MCF 10A (cell line): ENCODE measurements at regions of chr20 and their contacts with region 1.

Region 1: DNA sequence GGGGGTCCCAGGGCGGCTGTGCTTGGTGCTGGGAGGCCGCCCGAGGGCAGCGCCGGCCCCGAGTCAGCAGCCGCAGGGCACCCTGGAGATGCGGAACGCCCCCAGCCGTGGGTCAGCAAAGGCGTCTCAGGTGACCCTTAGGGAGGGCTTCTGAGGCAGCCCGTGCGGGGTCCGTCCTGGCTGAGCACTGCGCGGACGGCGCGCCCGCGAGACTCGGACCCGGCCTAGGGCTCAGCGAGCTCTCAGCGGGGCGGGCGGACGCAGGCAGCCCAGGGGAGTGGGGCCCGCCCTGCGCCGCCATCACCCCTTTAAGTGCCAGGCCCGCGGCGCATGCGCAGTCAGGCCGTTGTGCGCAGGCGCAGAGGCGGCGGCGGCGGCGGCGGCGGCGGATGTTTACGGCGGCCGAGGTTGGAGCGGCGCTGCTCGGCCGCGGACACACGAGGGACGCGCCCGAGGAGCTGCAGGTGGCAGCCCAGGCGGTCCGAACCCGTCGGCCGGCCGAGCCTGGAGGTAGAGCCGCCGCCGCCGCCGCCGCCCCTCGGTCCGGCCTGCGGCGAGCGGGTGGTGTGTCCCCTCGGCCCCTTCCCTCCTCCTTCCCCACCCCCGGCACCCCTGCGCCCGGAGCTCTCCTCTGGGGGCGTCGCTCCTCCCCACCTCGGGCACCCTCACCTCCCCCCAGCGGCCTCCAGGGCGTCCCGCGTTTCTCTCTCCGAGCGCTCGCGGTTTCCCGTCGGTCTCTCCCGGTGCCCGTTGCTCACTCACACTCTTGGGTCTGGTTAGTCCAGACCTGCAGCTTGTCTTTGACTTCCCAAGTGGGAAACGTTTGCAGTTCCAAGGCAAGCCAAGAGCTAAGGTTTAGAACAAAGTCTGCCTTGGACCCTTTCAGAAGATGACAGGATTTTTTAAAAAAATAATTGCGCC is at the start of gene PCMTD2:
- DNase-seq: peak; percentile 82
- H3K4me3 Mint-ChIP-seq: peak within 1 kb of the TSS; percentile 88
- H3K27ac Mint-ChIP-seq: peak within 1 kb of the TSS; percentile 92
- H3K4me1 Mint-ChIP-seq: peaks cover 24% of the 10 kb centered on the region
- H3K27me3 Mint-ChIP-seq: peaks cover 13% of the 10 kb centered on the region
- CTCF ChIP-seq: no peak
- total RNA-seq, gene PCMTD2: 39.4 and 45.9 TPM in 2 replicates

Region 2: DNA sequence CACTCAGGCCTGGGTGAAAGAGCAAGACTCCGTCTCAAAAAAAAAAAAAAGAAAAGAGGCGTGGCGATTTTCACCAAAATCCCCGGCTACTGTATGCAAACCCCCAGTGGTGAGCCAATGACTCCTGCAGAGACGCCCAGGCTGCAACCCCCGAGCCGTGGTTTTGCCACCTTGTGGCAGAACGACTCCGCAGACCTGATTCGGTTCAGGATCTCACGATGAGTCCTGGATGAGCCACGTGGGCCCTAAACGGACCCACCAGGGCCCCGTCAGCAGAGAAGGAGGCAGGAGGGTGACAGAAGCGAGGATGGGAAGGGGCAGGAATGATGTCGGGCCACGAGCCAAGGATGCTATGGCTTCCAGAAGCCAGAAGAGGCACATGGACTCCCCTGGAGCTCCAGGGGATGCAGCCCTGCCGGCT is 473.6 kb before region 1 on chr20:
- CTCF ChIA-PET with region 1: no interaction called
- POLR2A ChIA-PET with region 1: no interaction called
- intact Hi-C with region 1: no loop called
- DNase-seq: no peak
- H3K4me3 Mint-ChIP-seq: no peak overlapping the region
- H3K27ac Mint-ChIP-seq: no peak overlapping the region
- H3K4me1 Mint-ChIP-seq: peaks cover 9% of the 10 kb centered on the region
- H3K27me3 Mint-ChIP-seq: no peaks in the 10 kb centered on the region
- CTCF ChIP-seq: no peak

Region 3: DNA sequence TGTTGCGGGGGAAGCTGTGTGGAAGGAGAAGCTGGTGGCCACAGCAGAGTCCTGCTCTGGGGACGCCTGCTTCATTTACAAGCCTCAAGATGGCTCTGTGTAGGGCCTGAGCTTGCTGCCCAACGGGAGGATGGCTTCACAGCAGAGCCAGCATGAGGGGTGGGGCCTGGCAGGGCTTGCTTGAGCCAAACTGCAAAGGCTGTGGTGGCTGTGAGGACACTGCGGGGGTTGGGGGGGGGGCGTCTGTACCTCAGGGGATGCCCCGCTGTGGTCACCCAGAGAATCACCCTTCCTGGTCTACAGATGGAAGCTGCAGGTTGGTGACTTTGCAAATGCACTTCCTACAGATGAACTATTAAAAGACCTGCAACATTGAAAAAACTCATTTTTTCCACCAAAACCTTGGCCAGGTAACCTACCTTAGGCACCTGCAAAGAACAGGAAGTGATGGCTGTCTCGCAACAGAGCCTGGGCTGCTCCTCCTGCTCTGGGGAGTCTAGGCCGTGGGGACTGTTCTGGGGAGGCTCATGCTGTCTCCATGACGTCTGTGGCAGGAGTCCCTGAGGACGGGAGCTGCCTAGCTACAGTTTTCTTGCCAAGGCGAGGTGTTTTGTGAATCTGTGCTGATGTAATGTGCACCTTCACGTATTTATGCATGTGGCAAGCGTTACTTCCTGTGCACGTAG is 155.6 kb before region 1 on chr20:
- CTCF ChIA-PET with region 1: no interaction called
- POLR2A ChIA-PET with region 1: no interaction called
- intact Hi-C with region 1: no loop called
- DNase-seq: no peak
- H3K4me3 Mint-ChIP-seq: no peak overlapping the region
- H3K27ac Mint-ChIP-seq: no peak overlapping the region
- H3K4me1 Mint-ChIP-seq: no peaks in the 10 kb centered on the region
- H3K27me3 Mint-ChIP-seq: peaks cover 35% of the 10 kb centered on the region
- CTCF ChIP-seq: no peak

Region 4: GRCh38 chr20:64192406-64192805 is 63.2 kb before region 1 on chr20:
- CTCF ChIA-PET with region 1: no interaction called
- POLR2A ChIA-PET with region 1: interaction called, 11 read pairs
- intact Hi-C with region 1: no loop called
- DNase-seq: no peak
- H3K4me3 Mint-ChIP-seq: no peak overlapping the region
- H3K27ac Mint-ChIP-seq: no peak overlapping the region
- H3K4me1 Mint-ChIP-seq: no peaks in the 10 kb centered on the region
- H3K27me3 Mint-ChIP-seq: peaks cover 80% of the 10 kb centered on the region
- CTCF ChIP-seq: no peak

Region 5: GRCh38 chr20:64223526-64224067 is 32.0 kb before region 1 on chr20:
- CTCF ChIA-PET with region 1: interaction called, 5 read pairs
- POLR2A ChIA-PET with region 1: interaction called, 25 read pairs
- intact Hi-C with region 1: no loop called
- DNase-seq: no peak
- H3K4me3 Mint-ChIP-seq: no peak overlapping the region
- H3K27ac Mint-ChIP-seq: no peak overlapping the region
- H3K4me1 Mint-ChIP-seq: peaks cover 6% of the 10 kb centered on the region
- H3K27me3 Mint-ChIP-seq: peaks cover 14% of the 10 kb centered on the region
- CTCF ChIP-seq: no peak

Region 6: GRCh38 chr20:64229507-64230061 is 26.0 kb before region 1 on chr20:
- CTCF ChIA-PET with region 1: no interaction called
- POLR2A ChIA-PET with region 1: interaction called, 16 read pairs
- intact Hi-C with region 1: no loop called
- DNase-seq: no peak
- H3K4me3 Mint-ChIP-seq: no peak overlapping the region
- H3K27ac Mint-ChIP-seq: no peak overlapping the region
- H3K4me1 Mint-ChIP-seq: no peaks in the 10 kb centered on the region
- H3K27me3 Mint-ChIP-seq: peaks cover 20% of the 10 kb centered on the region
- CTCF ChIP-seq: no peak

Region 7: GRCh38 chr20:64244870-64245603 is 10.6 kb before region 1 on chr20:
- CTCF ChIA-PET with region 1: no interaction called
- POLR2A ChIA-PET with region 1: interaction called, 16 read pairs
- intact Hi-C with region 1: no loop called
- DNase-seq: no peak
- H3K4me3 Mint-ChIP-seq: no peak overlapping the region
- H3K27ac Mint-ChIP-seq: no peak overlapping the region
- H3K4me1 Mint-ChIP-seq: no peaks in the 10 kb centered on the region
- H3K27me3 Mint-ChIP-seq: peaks cover 70% of the 10 kb centered on the region
- CTCF ChIP-seq: no peak